ENCODE measurements at regions of chr4 and their contacts with region 1.

Region 1: DNA sequence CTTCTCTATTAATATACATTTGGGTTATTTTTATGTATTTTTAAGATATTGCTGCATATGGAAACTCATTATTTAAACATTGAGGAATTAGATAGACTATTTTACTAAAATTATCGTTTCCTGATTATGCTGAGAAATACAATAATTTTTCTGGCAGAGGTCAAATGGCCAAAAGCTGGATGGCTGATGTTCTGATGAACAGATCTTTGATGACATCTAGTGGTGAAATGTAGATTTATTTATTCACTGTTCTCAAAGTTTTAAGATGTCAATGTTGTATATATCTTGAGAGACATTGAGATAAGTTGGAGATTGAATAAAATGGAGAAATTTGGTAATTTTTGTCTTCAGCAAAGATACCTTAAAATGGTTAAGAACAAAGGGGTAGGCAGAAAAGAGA is 96.2 kb downstream of the UGT8 start:
- DNase-seq: no peak
- H3K4me3 ChIP-seq: no peak overlapping the region
- H3K27ac ChIP-seq: no peak overlapping the region
- H3K4me1 ChIP-seq: no peaks in the 10 kb centered on the region
- H3K27me3 ChIP-seq: no peaks in the 10 kb centered on the region
- CTCF ChIP-seq: peak in 1 of 3 experiments; percentile 54
- POLR2A ChIP-seq: no peak

Region 2: GRCh38 chr4:114386637-114387233 is 308.0 kb before region 1 on chr4:
- intact Hi-C with region 1: loop called (anchors 10 kb)
- DNase-seq: no peak
- H3K4me3 ChIP-seq: no peak overlapping the region
- H3K27ac ChIP-seq: no peak overlapping the region
- H3K4me1 ChIP-seq: no peaks in the 10 kb centered on the region
- H3K27me3 ChIP-seq: no peaks in the 10 kb centered on the region
- CTCF ChIP-seq: peak in 2 of 3 experiments; percentile 56 to 62
- POLR2A ChIP-seq: no peak

Region 3: GRCh38 chr4:114642173-114642780 is 52.5 kb before region 1 on chr4:
- intact Hi-C with region 1: no loop called
- DNase-seq: no peak
- H3K4me3 ChIP-seq: no peak overlapping the region
- H3K27ac ChIP-seq: no peak overlapping the region
- H3K4me1 ChIP-seq: no peaks in the 10 kb centered on the region
- H3K27me3 ChIP-seq: no peaks in the 10 kb centered on the region
- CTCF ChIP-seq: no peak
- POLR2A ChIP-seq: no peak

Measured in vagina (tissue), 2 donors.